PC-3 (cell line): ENCODE measurements at regions of chr4 and their contacts with region 1.

Region 1: DNA sequence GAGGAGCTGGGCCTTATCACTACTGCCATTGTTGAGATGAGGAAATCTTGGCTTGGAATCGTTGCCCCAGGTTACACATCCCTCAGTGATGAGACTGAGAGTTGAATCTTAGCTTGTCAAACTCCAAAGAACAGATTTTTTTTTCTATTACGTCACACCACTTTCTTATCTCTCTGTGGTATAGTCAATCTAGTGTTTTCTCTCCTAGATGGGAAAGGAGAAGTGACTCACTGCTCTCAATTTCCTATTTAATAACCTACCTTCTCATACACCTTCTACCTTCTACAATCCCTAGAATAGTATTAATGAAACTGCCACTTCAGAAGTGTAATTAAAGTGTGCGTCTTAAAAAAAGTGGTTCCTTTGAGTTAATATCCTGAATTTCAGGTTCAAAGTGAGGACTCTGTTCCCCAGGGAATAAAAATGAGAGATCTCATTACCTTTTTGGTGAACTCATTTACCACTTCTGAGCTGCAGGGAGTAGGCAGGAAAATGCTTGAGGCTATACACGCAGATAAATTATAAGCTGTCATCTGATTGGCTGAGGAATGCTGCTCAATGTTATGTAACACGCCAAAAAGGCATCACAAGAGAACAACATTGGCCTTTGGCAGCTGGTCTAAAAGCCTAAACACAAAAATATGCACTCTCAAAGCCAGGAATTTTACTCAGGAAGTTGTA is 59.3 kb downstream of the MAD2L1 start:
- DNase-seq: peak; percentile 48
- ATAC-seq: peak; percentile 31; the same call in 1 of the 2 replicates
- H3K4me3 ChIP-seq: no peak overlapping the region
- H3K27ac ChIP-seq: no peak overlapping the region
- H3K4me1 ChIP-seq: peaks cover 11% of the 10 kb centered on the region; the same call in 1 of the 2 replicates
- H3K27me3 ChIP-seq: no peaks in the 10 kb centered on the region
- CTCF ChIP-seq: no peak

Region 2: GRCh38 chr4:119510395-119511149 is 496.8 kb before region 1 on chr4:
- CTCF ChIA-PET with region 1: no interaction called
- POLR2A ChIA-PET with region 1: interaction called, 15 read pairs
- intact Hi-C with region 1: no loop called
- DNase-seq: no peak
- ATAC-seq: no peak
- H3K4me3 ChIP-seq: no peak overlapping the region
- H3K27ac ChIP-seq: no peak overlapping the region
- H3K4me1 ChIP-seq: no peaks in the 10 kb centered on the region
- H3K27me3 ChIP-seq: no peaks in the 10 kb centered on the region
- CTCF ChIP-seq: no peak

Region 3: GRCh38 chr4:120018786-120019185 is 11.5 kb after region 1 on chr4:
- CTCF ChIA-PET with region 1: no interaction called
- POLR2A ChIA-PET with region 1: no interaction called
- intact Hi-C with region 1: no loop called
- DNase-seq: no peak
- ATAC-seq: no peak
- H3K4me3 ChIP-seq: no peak overlapping the region
- H3K27ac ChIP-seq: no peak overlapping the region
- H3K4me1 ChIP-seq: no peaks in the 10 kb centered on the region
- H3K27me3 ChIP-seq: no peaks in the 10 kb centered on the region
- CTCF ChIP-seq: no peak

Region 4: DNA sequence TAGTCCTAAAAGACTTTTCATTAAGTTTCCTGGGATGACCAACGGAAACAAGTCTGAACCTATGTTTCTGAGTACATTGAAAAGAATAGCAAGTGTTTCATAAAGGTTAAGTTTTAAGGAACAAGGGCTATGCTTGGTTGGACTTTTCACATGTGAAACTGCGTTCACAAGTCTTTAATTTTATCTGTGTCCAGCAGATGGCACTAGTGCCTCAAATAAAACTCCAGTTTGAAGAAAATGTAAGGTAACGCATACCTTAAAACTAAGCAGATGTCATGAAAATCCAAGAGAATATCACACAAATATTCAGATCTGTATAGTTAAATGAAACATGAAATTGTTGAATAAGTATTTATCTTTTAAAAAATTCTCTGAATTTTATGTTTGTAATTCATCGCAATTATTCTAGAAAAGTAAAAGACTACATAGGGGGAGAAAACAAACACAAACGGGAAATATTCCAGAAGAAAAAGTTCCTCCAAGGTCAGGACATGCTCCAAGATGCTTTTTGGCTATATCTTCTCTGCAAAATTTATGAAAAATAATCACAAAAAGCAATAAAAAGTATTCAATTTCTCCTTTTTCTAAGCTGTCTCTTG is 148.9 kb after region 1 on chr4:
- CTCF ChIA-PET with region 1: no interaction called
- POLR2A ChIA-PET with region 1: no interaction called
- intact Hi-C with region 1: no loop called
- DNase-seq: peak; percentile 75
- ATAC-seq: no peak
- H3K4me3 ChIP-seq: no peak overlapping the region
- H3K27ac ChIP-seq: no peak overlapping the region
- H3K4me1 ChIP-seq: no peaks in the 10 kb centered on the region
- H3K27me3 ChIP-seq: peaks cover 4% of the 10 kb centered on the region; the same call in 1 of the 2 replicates
- CTCF ChIP-seq: peak; percentile 69